ENCODE measurements at regions of chr1 and their contacts with region 1.

Region 1: GRCh38 chr1:40143891-40144575 is 17.2 kb upstream of the RLF start:
- DNase-seq: peak; percentile 67
- H3K4me3 ChIP-seq: no peak overlapping the region
- H3K27ac ChIP-seq: no peak overlapping the region
- H3K4me1 ChIP-seq: no peaks in the 10 kb centered on the region
- H3K27me3 ChIP-seq: peaks cover 22 to 37% of the 10 kb centered on the region in 2 experiments
- CTCF ChIP-seq: peak; percentile 74 to 76
- POLR2A ChIP-seq: no peak

Region 2: GRCh38 chr1:39933956-39934941 is 209.8 kb before region 1 on chr1:
- CTCF ChIA-PET with region 1: no interaction called
- POLR2A ChIA-PET with region 1: no interaction called
- dilution Hi-C with region 1: no loop called
- intact Hi-C with region 1: no loop called
- DNase-seq: no peak
- H3K4me3 ChIP-seq: no peak overlapping the region
- H3K27ac ChIP-seq: no peak overlapping the region
- H3K4me1 ChIP-seq: no peaks in the 10 kb centered on the region
- H3K27me3 ChIP-seq: no peaks in the 10 kb centered on the region
- CTCF ChIP-seq: no peak
- POLR2A ChIP-seq: no peak

Region 3: DNA sequence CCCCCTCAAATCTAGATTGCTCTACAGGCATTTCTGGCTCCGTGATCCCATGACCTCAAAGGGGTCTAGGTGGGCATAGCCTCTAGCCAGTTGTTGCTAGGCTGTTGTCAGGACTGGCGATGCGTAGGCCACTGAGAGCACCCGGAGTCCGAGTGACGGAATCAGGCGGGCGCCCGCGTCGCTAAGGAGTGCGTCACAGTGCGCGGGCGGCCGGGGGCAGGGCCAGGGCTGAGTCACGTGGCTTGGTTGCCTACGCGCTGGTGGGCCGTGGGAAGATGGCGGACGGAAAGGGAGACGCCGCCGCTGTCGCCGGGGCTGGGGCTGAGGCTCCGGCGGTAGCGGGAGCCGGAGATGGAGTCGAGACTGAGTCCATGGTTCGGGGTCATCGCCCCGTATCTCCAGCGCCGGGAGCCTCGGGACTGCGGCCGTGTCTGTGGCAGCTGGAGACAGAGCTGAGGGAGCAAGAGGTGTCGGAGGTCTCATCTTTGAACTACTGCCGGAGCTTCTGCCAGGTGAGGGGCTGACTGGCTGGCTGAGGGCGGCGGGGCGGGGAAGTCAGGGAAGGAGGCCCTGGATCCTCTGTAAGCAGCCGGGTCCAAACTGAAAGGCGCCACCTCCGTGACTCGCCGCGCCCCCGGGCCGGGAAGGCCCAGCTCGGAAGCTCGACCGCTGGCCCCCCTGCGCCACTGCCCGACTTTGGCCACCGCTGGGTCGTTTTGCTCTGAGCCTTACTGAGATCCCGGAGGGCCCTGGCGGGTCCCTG is 17.3 kb after region 1 on chr1 and contains the start of gene RLF:
- CTCF ChIA-PET with region 1: interaction called, 18 read pairs
- POLR2A ChIA-PET with region 1: no interaction called
- dilution Hi-C with region 1: no loop called
- intact Hi-C with region 1: no loop called
- DNase-seq: peak; percentile 95
- H3K4me3 ChIP-seq: peak within 1 kb of the TSS; percentile 66 to 93 (median 87)
- H3K27ac ChIP-seq: peak within 1 kb of the TSS; percentile 79
- H3K4me1 ChIP-seq: peaks cover 15% of the 10 kb centered on the region
- H3K27me3 ChIP-seq: peaks cover 5 to 11% of the 10 kb centered on the region in 2 experiments
- CTCF ChIP-seq: no peak
- POLR2A ChIP-seq: peak; percentile 82
- total RNA-seq, gene RLF: 9.0 and 9.4 TPM in 2 replicates

Region 4: DNA sequence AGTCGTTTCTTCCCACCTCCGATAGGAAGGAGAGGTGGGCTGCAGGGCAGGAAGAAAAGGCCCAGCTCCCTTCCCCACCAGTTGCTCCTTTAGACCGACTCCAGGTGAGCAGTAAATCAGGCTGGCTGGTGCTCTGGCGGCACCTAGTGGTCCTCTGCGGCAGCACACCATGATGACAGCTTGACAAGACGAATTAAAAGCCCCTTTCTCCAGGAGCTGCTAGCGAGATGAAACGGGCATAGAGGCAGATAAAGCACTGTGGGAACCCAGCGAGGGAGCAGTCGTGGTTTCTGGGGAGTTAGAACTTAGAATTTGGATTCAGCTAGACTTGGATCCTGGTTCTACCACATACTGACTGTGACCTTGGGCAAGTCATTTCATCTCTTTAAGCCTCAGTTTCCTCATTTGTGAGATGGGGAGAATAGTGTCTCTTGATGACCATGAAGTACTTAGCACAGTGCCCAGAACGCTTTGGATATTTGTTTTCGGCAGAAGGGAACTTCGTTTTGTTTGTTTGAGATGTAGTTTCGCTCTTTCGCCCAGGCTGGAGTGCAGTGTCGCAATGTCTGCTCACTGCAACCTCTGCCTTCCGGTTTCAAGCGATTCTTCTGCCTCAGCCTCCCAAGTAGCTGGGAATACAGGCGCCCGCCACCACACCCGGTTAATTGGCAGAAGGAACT is 194.9 kb after region 1 on chr1:
- CTCF ChIA-PET with region 1: interaction called, 362 read pairs
- POLR2A ChIA-PET with region 1: interaction called, 3 read pairs
- dilution Hi-C with region 1: no loop called
- intact Hi-C with region 1: loop called (anchors 1 kb)
- DNase-seq: peak; percentile 87
- H3K4me3 ChIP-seq: no peak overlapping the region
- H3K27ac ChIP-seq: no peak overlapping the region
- H3K4me1 ChIP-seq: no peaks in the 10 kb centered on the region
- H3K27me3 ChIP-seq: peaks cover 0 to 7% of the 10 kb centered on the region in 2 experiments
- CTCF ChIP-seq: peak; percentile 98 to 99
- POLR2A ChIP-seq: no peak

Region 5: GRCh38 chr1:40385437-40386358 is 241.7 kb after region 1 on chr1:
- CTCF ChIA-PET with region 1: interaction called, 15 read pairs
- POLR2A ChIA-PET with region 1: no interaction called
- dilution Hi-C with region 1: no loop called
- intact Hi-C with region 1: no loop called
- DNase-seq: peak; percentile 11
- H3K4me3 ChIP-seq: no peak overlapping the region
- H3K27ac ChIP-seq: no peak overlapping the region
- H3K4me1 ChIP-seq: peaks cover 8% of the 10 kb centered on the region
- H3K27me3 ChIP-seq: no peaks in the 10 kb centered on the region
- CTCF ChIP-seq: no peak
- POLR2A ChIP-seq: no peak

Region 6: DNA sequence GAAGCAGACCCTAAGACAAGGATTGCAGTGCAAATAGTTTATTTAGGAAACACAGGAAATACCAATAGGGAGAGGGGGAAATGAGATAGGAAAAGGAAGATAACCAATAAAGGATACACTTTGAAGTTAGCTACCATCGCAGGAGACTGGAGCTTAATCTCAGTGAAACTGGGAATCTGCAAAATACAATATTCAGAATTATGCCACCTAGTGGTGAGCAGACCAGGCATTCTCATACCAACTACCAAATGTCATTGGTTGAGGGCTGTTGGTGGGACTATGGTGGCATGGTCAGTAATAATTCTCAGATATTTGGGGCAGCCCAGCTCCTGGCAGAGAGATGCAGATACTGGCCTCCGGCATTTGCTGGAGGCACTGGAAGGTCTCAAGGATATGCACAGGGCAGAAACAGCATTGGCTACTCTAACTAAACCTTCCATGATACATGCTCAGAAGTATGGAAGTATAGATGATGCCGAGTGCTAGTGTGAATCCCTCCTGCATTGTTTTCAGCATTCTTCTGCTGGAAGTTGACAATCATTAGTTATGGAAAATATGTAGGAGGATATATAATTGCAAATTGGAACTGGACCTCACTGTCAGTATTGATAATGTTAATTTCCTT is 294.5 kb after region 1 on chr1:
- CTCF ChIA-PET with region 1: interaction called, 105 read pairs
- POLR2A ChIA-PET with region 1: no interaction called
- dilution Hi-C with region 1: no loop called
- intact Hi-C with region 1: loop called (anchors 1 kb)
- DNase-seq: peak; percentile 51
- H3K4me3 ChIP-seq: no peak overlapping the region
- H3K27ac ChIP-seq: no peak overlapping the region
- H3K4me1 ChIP-seq: no peaks in the 10 kb centered on the region
- H3K27me3 ChIP-seq: no peaks in the 10 kb centered on the region
- CTCF ChIP-seq: peak; percentile 67 to 82
- POLR2A ChIP-seq: no peak

Region 7: DNA sequence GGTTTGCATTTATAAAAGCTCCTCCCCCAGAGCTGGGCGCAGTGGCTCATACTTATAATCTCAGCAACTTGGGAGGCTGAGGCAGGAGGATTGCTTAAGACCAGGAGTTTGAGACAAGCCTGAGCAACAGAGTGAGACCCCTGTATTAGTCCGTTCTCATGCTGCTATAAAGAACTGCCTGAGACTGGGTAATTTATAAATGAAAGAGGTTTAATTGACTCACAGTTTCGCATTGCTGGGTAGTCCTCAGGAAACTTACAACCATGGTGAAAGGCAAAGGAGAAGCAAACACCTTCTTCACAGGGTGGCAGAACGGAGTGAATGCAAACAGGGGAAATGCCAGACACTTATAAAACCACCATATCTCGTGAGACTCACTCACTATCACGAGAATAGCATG is 439.9 kb after region 1 on chr1:
- CTCF ChIA-PET with region 1: no interaction called
- POLR2A ChIA-PET with region 1: no interaction called
- dilution Hi-C with region 1: no loop called
- intact Hi-C with region 1: no loop called
- DNase-seq: no peak
- H3K4me3 ChIP-seq: no peak overlapping the region
- H3K27ac ChIP-seq: no peak overlapping the region
- H3K4me1 ChIP-seq: no peaks in the 10 kb centered on the region
- H3K27me3 ChIP-seq: peaks cover 3 to 4% of the 10 kb centered on the region in 2 experiments
- CTCF ChIP-seq: no peak
- POLR2A ChIP-seq: no peak

Measured in endothelial cell of umbilical vein (primary cell).